OCI-LY7 (cell line): ENCODE measurements at regions of chrX and their contacts with region 1.

Region 1: GRCh38 chrX:12497832-12498591 is 293.2 kb upstream of the PRPS2 start:
- DNase-seq: peak; percentile 59
- H3K4me3 ChIP-seq: no peak overlapping the region
- H3K27ac ChIP-seq: no peak overlapping the region
- H3K4me1 ChIP-seq: peaks cover 15% of the 10 kb centered on the region
- CTCF ChIP-seq: peak; percentile 76

Region 2: GRCh38 chrX:12567857-12568256 is 69.8 kb after region 1 on chrX:
- CTCF ChIA-PET with region 1: no interaction called
- POLR2A ChIA-PET with region 1: no interaction called
- intact Hi-C with region 1: loop called (anchors 1 kb)
- DNase-seq: peak; percentile 29
- H3K4me3 ChIP-seq: no peak overlapping the region
- H3K27ac ChIP-seq: no peak overlapping the region
- H3K4me1 ChIP-seq: no peaks in the 10 kb centered on the region
- CTCF ChIP-seq: peak; percentile 80

Region 3: GRCh38 chrX:12701628-12702027 is 203.6 kb after region 1 on chrX:
- CTCF ChIA-PET with region 1: no interaction called
- POLR2A ChIA-PET with region 1: no interaction called
- intact Hi-C with region 1: loop called (anchors 1 kb)
- DNase-seq: peak; percentile 64
- H3K4me3 ChIP-seq: no peak overlapping the region
- H3K27ac ChIP-seq: no peak overlapping the region
- H3K4me1 ChIP-seq: no peaks in the 10 kb centered on the region
- CTCF ChIP-seq: peak; percentile 77

Region 4: DNA sequence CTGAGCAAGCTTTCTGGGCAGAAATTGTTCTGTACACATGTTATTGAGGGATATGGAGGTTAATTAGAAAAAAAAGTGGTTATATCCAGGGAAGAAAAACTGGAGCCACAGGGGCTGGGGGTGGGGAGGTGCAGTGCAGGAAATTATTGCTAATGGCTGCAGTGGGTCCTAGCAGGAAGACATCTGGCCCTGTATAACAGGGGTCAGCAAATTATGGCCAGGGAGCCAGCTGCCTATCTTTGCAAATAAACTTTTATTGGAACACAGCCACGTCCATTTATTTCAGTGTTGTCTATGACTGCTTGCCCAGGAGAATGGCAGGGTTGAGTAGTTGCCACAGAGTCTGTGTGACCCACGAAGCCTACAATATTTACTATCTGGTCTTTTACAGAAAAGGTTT is 269.8 kb after region 1 on chrX:
- CTCF ChIA-PET with region 1: no interaction called
- POLR2A ChIA-PET with region 1: no interaction called
- intact Hi-C with region 1: loop called (anchors 10 kb)
- DNase-seq: no peak
- H3K4me3 ChIP-seq: no peak overlapping the region
- H3K27ac ChIP-seq: no peak overlapping the region
- H3K4me1 ChIP-seq: no peaks in the 10 kb centered on the region
- CTCF ChIP-seq: no peak